GM12878 (cell line): ENCODE measurements at regions of chr6 and their contacts with region 1.

Region 1: GRCh38 chr6:150016324-150017185 is 8.8 kb downstream of the RAET1L start:
- DNase-seq: no peak
- ATAC-seq: peak; percentile 89
- H3K4me3 ChIP-seq: no peak overlapping the region
- H3K27ac ChIP-seq: no peak overlapping the region
- H3K4me1 ChIP-seq: no peaks in the 10 kb centered on the region
- H3K27me3 ChIP-seq: peaks cover 0 to 3% of the 10 kb centered on the region in 2 experiments; a peak in 3 of 4 replicates
- CTCF ChIP-seq: peak; percentile 51 to 58 (median 55); a peak in 5 of 6 replicates
- EP300 ChIP-seq: no peak
- POLR2A ChIP-seq: no peak
- RAD21 ChIP-seq: peak; percentile 79

Region 2: GRCh38 chr6:149723771-149724417 is 292.7 kb before region 1 on chr6:
- CTCF ChIA-PET with region 1: no interaction called
- POLR2A ChIA-PET with region 1: no interaction called
- RAD21 ChIA-PET with region 1: no interaction called
- SMC1A ChIA-PET with region 1: no interaction called
- in situ Hi-C with region 1: no loop called
- intact Hi-C with region 1: loop called (anchors 10 kb)
- DNase-seq: no peak
- ATAC-seq: peak; percentile 91
- H3K4me3 ChIP-seq: no peak overlapping the region
- H3K27ac ChIP-seq: no peak overlapping the region
- H3K4me1 ChIP-seq: no peaks in the 10 kb centered on the region
- H3K27me3 ChIP-seq: no peaks in the 10 kb centered on the region
- CTCF ChIP-seq: peak; percentile 73 to 76 (median 73)
- EP300 ChIP-seq: no peak
- POLR2A ChIP-seq: no peak
- RAD21 ChIP-seq: peak; percentile 68

Region 3: GRCh38 chr6:149840345-149841075 is 176.0 kb before region 1 on chr6:
- CTCF ChIA-PET with region 1: no interaction called
- POLR2A ChIA-PET with region 1: no interaction called
- RAD21 ChIA-PET with region 1: no interaction called
- SMC1A ChIA-PET with region 1: no interaction called
- in situ Hi-C with region 1: loop called (anchors 10 kb)
- intact Hi-C with region 1: no loop called
- DNase-seq: no peak
- ATAC-seq: peak; percentile 86
- H3K4me3 ChIP-seq: no peak overlapping the region
- H3K27ac ChIP-seq: no peak overlapping the region
- H3K4me1 ChIP-seq: no peaks in the 10 kb centered on the region
- H3K27me3 ChIP-seq: peaks cover 0 to 1% of the 10 kb centered on the region in 2 experiments; a peak in 3 of 4 replicates
- CTCF ChIP-seq: peak; percentile 45 to 71 (median 68)
- EP300 ChIP-seq: no peak
- POLR2A ChIP-seq: no peak
- RAD21 ChIP-seq: peak; percentile 53

Region 4: DNA sequence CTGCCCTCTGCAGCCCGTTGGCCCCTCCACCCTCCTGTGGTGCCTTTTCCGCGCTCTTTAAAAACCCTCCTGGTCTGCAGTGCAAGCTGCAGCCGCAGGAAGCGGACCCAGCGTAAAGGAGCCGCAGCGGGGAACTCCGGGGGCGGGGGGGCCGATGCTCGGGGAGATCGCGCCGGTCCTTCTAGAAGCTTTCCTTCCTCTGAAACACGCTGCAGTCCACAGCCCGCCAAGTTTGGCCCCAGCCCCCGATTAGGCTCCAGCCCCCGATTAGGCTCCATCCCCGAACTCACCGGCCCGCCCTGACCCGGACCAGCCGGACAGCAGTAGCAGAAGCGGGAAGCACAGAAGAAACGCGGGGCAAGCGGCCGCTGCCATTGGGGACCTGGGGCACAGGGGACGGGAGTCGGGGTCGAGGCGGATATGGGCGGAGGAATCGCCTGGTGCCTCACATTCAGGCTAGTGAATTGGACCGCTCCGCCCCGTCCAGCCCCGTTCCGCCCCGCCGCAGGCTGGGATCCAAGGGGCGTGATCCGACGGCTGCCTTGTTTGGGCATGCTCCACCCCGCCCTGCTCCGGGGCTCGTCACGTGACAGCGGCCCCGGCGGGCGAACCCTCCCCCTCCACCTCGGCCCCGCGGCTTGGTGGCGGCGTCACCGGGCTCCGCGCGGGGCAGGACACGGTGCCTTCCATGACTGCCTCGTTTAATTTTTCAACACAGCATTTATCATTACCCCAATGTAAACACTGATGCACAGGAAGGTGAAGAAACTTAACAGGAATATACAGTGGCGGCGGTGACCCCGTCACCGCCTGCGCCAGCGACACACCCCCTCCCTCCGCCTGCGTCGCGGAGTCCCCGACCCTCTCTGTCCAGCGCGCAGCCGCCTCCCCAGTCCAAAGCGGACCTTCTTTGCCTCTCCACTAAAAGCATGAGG is 11.5 kb before region 1 on chr6:
- CTCF ChIA-PET with region 1: interaction called, 10 read pairs
- POLR2A ChIA-PET with region 1: no interaction called
- RAD21 ChIA-PET with region 1: interaction called, 5 read pairs
- SMC1A ChIA-PET with region 1: interaction called, 3 read pairs
- in situ Hi-C with region 1: no loop called
- intact Hi-C with region 1: no loop called
- DNase-seq: no peak
- ATAC-seq: peak; percentile 84
- H3K4me3 ChIP-seq: peak overlapping the region; percentile 73
- H3K27ac ChIP-seq: no peak overlapping the region
- H3K4me1 ChIP-seq: peaks cover 35% of the 10 kb centered on the region
- H3K27me3 ChIP-seq: no peaks in the 10 kb centered on the region; a peak in 2 of 4 replicates
- CTCF ChIP-seq: 0 out of 6 replicates have a peak, but pooled peaks of 1 of the 3 experiments have one; percentile 18
- EP300 ChIP-seq: peak in 1 of 2 experiments; percentile 8; a peak in 1 of 4 replicates
- POLR2A ChIP-seq: peak; percentile 72
- RAD21 ChIP-seq: 0 out of 2 replicates have a peak, but pooled peaks have one; percentile 2

Region 5: DNA sequence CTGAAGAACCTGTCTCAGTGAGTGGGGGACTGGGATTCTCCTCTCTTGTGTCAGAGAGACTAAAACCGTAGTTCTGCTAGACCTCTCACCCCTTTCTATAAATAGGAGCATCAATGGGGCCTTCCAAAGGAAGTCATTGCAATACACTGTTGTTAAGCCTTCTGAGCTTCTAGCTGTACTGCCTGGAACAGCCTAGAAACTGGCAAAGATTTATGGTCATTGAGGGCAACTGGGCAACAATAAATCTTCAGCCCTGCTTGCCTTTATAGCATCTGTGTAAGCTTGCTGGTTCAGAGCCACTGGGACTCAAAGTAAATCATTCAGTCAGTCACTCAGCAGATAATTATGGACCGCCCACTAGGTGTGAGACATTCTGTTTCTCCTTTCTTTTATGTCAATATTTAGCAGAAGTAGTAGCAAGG is 179.5 kb after region 1 on chr6:
- CTCF ChIA-PET with region 1: no interaction called
- POLR2A ChIA-PET with region 1: no interaction called
- RAD21 ChIA-PET with region 1: no interaction called
- SMC1A ChIA-PET with region 1: no interaction called
- in situ Hi-C with region 1: no loop called
- intact Hi-C with region 1: no loop called
- DNase-seq: no peak
- ATAC-seq: peak; percentile 18; the same call in 1 of the 3 replicates
- H3K4me3 ChIP-seq: no peak overlapping the region
- H3K27ac ChIP-seq: no peak overlapping the region
- H3K4me1 ChIP-seq: no peaks in the 10 kb centered on the region
- H3K27me3 ChIP-seq: no peaks in the 10 kb centered on the region; a peak in 1 of 4 replicates
- CTCF ChIP-seq: no peak
- EP300 ChIP-seq: no peak
- POLR2A ChIP-seq: no peak
- RAD21 ChIP-seq: no peak

Region 6: DNA sequence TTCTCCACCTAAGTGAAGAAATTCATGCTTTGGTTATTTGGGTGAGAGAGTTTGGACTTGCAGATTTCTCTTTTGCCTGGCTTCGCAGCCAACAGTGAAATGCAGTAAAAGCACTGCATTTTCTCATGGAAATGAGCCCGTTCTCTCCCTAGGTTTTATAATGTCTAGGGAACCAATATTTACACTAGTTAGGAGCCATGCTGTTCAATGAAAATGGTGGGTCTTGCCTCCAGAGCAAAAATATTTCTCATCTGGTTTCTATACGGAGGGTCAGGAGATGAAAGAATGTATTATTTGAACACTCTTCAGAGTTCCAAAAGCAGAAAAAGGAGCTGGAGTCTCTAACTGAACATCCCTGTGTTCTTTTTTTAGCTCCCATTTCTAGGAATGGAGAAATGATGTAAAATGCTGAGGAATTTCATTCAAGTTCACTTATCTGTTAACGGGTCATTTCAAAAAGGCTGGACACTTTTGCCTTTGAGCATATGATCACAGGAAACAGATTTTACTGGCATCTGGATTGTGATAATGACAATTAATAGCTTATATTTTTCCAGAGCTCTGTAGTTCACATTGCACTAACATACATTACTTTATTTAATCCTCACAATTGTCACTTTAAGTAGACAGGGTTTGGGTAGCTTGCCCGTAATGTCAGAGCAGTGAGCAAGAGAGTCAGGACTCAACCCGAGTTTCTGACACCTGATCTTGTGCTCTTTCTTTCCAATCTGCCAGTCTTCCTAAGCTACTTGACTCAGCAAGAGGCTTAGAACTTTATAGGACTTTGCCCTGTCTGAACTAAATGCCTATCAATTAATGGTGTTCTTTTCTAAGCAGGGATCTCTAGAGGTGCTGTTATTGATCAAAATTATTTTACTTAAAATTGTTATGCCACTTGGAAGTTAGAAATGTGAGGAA is 204.3 kb after region 1 on chr6:
- CTCF ChIA-PET with region 1: no interaction called
- POLR2A ChIA-PET with region 1: no interaction called
- RAD21 ChIA-PET with region 1: no interaction called
- SMC1A ChIA-PET with region 1: no interaction called
- in situ Hi-C with region 1: no loop called
- intact Hi-C with region 1: no loop called
- DNase-seq: no peak
- ATAC-seq: no peak
- H3K4me3 ChIP-seq: no peak overlapping the region
- H3K27ac ChIP-seq: no peak overlapping the region
- H3K4me1 ChIP-seq: no peaks in the 10 kb centered on the region
- H3K27me3 ChIP-seq: no peaks in the 10 kb centered on the region; a peak in 1 of 4 replicates
- CTCF ChIP-seq: no peak
- EP300 ChIP-seq: no peak
- POLR2A ChIP-seq: no peak
- RAD21 ChIP-seq: no peak